G401 (cell line): ENCODE measurements at regions of chr7 and their contacts with region 1.

Region 1: GRCh38 chr7:101058355-101058754 is 26.9 kb upstream of the TRIM56 start:
- DNase-seq: peak; percentile 8

Region 2: GRCh38 chr7:100889761-100890634 is 168.4 kb before region 1 on chr7:
- in situ Hi-C with region 1: loop called (anchors 10 kb)
- DNase-seq: peak; percentile 94